CD8-positive, alpha-beta memory T cell (primary cell): ENCODE measurements at regions of chr3 and their contacts with region 1.

Region 1: DNA sequence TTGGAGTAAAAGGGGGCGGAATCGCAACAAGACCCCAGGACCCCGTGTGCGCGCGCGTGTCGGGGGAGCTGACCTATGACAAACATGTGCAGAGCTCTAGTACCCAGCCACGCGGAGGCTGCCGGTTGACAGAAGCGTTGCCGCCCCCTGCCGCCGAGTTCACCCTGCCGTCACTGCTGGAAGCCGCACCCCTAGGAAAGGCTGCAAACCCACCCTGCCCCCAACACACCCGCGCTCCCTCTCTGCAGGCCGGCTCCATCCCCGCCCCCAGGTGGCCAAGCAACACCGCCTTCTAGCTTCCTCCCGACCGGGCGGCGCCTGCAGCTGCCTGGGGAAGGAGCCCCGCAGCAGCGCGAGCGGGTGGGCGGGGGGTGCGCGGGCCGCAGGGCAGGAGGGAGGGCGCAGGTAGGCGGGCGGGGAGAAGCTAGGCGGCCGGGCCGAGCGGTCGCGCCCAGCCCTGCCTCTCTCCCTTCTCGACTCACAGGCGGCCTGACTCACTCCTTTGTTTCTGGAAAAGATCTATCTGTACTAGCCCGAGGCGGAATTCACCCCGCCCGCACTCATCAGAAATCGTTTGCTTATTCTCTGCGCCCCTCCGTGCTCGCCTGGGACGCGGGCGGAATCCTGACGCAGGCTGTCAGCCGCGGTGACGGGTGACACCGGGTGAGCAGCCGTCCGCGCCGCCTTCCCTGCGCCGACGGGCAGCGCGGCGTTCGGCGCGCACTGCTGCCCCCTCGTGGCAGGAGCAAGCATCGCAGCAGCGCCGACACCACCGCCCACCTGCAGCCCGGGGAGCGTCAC is 160.8 kb downstream of the GAP43 start:
- DNase-seq: peak; percentile 85 to 94 (median 92)
- H3K4me3 ChIP-seq: peak overlapping the region; percentile 71
- H3K4me3 Mint-ChIP-seq: peak overlapping the region; percentile 82 to 95 (median 88)
- H3K27ac ChIP-seq: peak overlapping the region; percentile 91
- H3K27ac Mint-ChIP-seq: peak overlapping the region; percentile 82 to 99 (median 98)
- H3K4me1 ChIP-seq: peaks cover 5% of the 10 kb centered on the region
- H3K4me1 Mint-ChIP-seq: peaks cover 11 to 20% (median 15%) of the 10 kb centered on the region in 3 donors
- H3K27me3 ChIP-seq: no peaks in the 10 kb centered on the region
- H3K27me3 Mint-ChIP-seq: peaks cover 0 to 7% of the 10 kb centered on the region in 2 donors

Region 2: DNA sequence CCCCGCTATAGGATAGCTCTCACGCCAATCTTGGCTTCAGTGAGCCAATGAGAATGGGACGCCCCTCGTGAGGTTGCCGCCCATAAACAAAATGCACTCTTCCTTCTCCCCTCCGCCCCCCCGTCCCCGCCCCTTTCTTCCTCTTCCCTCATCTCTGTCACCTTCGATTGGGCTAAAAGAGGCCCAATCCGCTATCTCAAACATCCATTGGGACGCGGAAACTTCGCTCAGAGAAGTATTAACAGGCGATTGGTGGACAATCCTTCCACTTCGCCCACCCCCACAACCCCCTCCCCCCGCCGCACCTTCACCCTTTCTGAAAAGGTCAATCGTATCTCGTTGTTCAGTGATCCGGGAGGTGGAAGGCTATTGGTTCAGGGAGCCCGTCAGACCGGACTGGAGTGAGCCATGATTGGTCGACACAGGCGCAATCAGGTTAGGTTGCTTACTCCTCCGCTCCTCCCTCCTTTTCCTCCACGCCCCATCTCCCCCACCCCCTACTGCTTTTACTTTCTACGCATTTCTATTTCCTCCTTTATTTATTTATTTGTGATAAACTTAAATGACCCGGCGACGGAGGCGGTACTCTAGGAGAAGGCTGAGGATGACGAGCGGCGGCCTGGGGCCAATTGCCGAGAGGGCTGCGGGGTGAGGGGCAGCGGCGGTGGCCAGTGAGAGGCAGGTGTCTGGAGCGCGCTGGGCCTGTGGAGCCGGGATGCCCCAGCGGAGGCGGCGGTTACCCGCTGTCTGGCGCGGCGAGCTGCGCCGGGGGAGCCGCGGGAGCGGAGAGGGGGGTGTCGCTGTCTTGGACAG is 636.6 kb before region 1 on chr3:
- CTCF ChIA-PET with region 1: interaction called, 14 read pairs
- POLR2A ChIA-PET with region 1: interaction called, 7 read pairs
- DNase-seq: peak; percentile 94 to 98 (median 97)
- H3K4me3 ChIP-seq: peak overlapping the region; percentile 69
- H3K4me3 Mint-ChIP-seq: peak overlapping the region; percentile 91 to 98 (median 96)
- H3K27ac ChIP-seq: peak overlapping the region; percentile 93
- H3K27ac Mint-ChIP-seq: peak overlapping the region; percentile 92 to 100 (median 99)
- H3K4me1 ChIP-seq: peaks cover 22% of the 10 kb centered on the region
- H3K4me1 Mint-ChIP-seq: peaks cover 25 to 47% (median 32%) of the 10 kb centered on the region in 3 donors
- H3K27me3 ChIP-seq: no peaks in the 10 kb centered on the region
- H3K27me3 Mint-ChIP-seq: no peaks in the 10 kb centered on the region

Region 3: DNA sequence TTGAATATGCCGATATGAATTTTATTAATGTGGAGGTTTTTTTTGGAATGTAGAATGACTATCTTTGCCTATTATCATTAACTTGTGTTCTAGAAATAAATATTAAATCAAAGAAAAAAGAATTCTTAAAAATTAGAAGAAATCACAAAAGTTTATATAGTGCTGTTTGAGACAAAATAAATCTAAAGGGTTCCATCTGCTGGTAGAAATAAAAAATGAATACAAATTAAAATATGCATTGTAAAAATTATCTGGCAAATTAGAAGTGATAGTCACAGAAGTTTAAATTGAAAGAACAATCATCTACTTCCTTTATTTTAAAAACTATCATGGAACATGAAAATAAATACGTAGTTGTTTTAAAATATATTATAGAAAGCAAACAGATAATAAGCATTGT is 614.3 kb before region 1 on chr3:
- CTCF ChIA-PET with region 1: interaction called, 12 read pairs
- POLR2A ChIA-PET with region 1: interaction called, 5 read pairs
- DNase-seq: peak in 2 of 5 donors; percentile 15 to 20
- H3K4me3 ChIP-seq: no peak overlapping the region
- H3K4me3 Mint-ChIP-seq: no peak overlapping the region
- H3K27ac ChIP-seq: no peak overlapping the region
- H3K27ac Mint-ChIP-seq: no peak overlapping the region
- H3K4me1 ChIP-seq: peaks cover 13% of the 10 kb centered on the region
- H3K4me1 Mint-ChIP-seq: peaks cover 11 to 26% (median 13%) of the 10 kb centered on the region in 3 donors
- H3K27me3 ChIP-seq: no peaks in the 10 kb centered on the region
- H3K27me3 Mint-ChIP-seq: no peaks in the 10 kb centered on the region

Region 4: DNA sequence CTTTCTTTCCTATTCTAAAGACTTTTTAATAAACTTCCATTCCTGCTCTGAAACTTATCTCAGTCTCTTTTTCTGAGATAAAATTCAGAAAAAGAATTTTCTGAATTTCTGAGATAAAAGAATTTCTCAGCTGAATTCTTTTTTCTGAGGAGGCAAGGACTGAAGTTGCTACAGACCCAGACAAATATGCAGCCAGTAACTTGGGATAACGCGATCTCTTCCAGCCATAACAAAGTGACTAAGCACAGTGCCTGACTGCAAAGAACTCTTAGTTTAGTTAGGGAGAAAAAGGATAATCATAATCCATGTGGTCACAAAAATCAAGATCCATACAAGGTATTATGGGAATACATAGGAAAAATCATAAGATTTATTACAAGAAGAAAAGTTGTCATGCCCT is 382.8 kb before region 1 on chr3:
- CTCF ChIA-PET with region 1: no interaction called
- POLR2A ChIA-PET with region 1: no interaction called
- DNase-seq: no peak
- H3K4me3 ChIP-seq: no peak overlapping the region
- H3K4me3 Mint-ChIP-seq: no peak overlapping the region
- H3K27ac ChIP-seq: no peak overlapping the region
- H3K27ac Mint-ChIP-seq: no peak overlapping the region
- H3K4me1 ChIP-seq: no peaks in the 10 kb centered on the region
- H3K4me1 Mint-ChIP-seq: no peaks in the 10 kb centered on the region
- H3K27me3 ChIP-seq: no peaks in the 10 kb centered on the region
- H3K27me3 Mint-ChIP-seq: no peaks in the 10 kb centered on the region

Region 5: DNA sequence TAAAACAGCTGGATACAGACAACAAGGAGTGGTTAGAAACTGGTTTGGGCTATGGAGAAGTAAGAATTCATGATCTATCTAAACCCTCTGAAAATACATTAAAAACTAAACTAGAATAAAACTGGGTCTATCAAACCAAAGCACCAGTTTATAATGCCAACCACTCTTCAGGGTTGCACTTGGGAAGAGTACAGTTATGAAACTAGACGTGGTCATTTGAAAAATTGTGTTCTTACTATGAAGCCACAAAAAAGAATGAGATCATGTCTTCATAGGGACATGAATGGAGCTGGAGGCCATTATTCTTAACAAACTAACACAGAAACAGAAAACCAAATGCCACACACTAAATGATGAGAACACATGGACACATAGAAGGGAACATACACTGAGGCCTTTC is 57.0 kb before region 1 on chr3:
- CTCF ChIA-PET with region 1: no interaction called
- POLR2A ChIA-PET with region 1: no interaction called
- DNase-seq: no peak
- H3K4me3 ChIP-seq: no peak overlapping the region
- H3K4me3 Mint-ChIP-seq: no peak overlapping the region
- H3K27ac ChIP-seq: no peak overlapping the region
- H3K27ac Mint-ChIP-seq: no peak overlapping the region
- H3K4me1 ChIP-seq: no peaks in the 10 kb centered on the region
- H3K4me1 Mint-ChIP-seq: no peaks in the 10 kb centered on the region
- H3K27me3 ChIP-seq: no peaks in the 10 kb centered on the region
- H3K27me3 Mint-ChIP-seq: peaks cover 0 to 1% of the 10 kb centered on the region in 2 donors

Region 6: DNA sequence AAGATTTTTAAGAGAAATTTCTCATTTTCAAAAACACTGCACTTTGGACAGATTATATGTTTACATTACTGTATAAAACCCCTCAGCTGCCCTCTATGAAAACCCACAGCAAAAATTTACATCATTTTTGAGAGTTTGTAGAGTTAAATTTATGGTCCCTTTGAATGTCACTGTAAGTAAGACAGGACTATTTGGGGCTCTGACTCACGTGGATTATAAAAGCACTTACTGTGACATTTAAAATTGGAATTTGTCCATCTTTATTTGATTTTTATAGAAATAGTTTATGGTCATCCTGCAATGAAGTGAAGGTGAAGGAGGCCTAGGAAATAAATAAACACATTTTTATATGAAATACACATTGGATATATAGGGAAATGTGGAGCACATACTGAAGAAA is 11.2 kb before region 1 on chr3:
- CTCF ChIA-PET with region 1: interaction called, 15 read pairs
- POLR2A ChIA-PET with region 1: no interaction called
- DNase-seq: no peak
- H3K4me3 ChIP-seq: no peak overlapping the region
- H3K4me3 Mint-ChIP-seq: no peak overlapping the region
- H3K27ac ChIP-seq: no peak overlapping the region
- H3K27ac Mint-ChIP-seq: no peak overlapping the region
- H3K4me1 ChIP-seq: no peaks in the 10 kb centered on the region
- H3K4me1 Mint-ChIP-seq: no peaks in the 10 kb centered on the region
- H3K27me3 ChIP-seq: no peaks in the 10 kb centered on the region
- H3K27me3 Mint-ChIP-seq: peaks cover 2 to 7% of the 10 kb centered on the region in 2 donors

Region 7: DNA sequence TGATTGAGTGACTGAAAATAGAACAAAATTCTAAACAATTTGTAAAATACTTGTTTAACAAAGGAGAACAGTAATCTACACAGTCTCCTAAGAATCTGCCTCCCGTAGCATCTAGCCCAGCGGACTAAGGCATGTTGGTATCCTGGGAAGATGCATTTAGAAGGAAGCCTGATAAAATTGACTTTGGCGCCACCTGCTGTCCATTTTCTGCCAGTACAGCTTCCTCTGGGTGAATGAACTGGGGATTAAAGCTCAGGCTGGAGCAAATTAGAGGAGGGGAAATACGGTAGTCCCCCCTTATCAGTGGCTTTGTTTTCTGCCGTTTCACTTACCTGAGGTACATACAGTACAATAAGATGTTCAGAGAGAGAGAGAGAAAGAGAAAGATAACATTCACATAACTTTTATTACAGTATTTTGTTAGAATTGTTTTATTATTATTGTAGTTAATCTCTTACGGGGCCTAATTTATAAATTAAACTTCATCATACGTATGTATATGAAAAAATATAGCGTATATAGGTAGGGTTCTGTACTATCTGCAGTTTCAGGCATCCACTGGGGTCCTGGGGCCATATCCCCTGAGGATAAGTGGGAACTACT is 30.7 kb after region 1 on chr3:
- CTCF ChIA-PET with region 1: interaction called, 22 read pairs
- POLR2A ChIA-PET with region 1: interaction called, 3 read pairs
- DNase-seq: peak; percentile 38 to 75 (median 54)
- H3K4me3 ChIP-seq: no peak overlapping the region
- H3K4me3 Mint-ChIP-seq: no peak overlapping the region
- H3K27ac ChIP-seq: no peak overlapping the region
- H3K27ac Mint-ChIP-seq: no peak overlapping the region
- H3K4me1 ChIP-seq: no peaks in the 10 kb centered on the region
- H3K4me1 Mint-ChIP-seq: no peaks in the 10 kb centered on the region
- H3K27me3 ChIP-seq: no peaks in the 10 kb centered on the region
- H3K27me3 Mint-ChIP-seq: peaks cover 9 to 13% of the 10 kb centered on the region in 2 donors